ENCODE measurements at regions of chr6 and their contacts with region 1.

Region 1: DNA sequence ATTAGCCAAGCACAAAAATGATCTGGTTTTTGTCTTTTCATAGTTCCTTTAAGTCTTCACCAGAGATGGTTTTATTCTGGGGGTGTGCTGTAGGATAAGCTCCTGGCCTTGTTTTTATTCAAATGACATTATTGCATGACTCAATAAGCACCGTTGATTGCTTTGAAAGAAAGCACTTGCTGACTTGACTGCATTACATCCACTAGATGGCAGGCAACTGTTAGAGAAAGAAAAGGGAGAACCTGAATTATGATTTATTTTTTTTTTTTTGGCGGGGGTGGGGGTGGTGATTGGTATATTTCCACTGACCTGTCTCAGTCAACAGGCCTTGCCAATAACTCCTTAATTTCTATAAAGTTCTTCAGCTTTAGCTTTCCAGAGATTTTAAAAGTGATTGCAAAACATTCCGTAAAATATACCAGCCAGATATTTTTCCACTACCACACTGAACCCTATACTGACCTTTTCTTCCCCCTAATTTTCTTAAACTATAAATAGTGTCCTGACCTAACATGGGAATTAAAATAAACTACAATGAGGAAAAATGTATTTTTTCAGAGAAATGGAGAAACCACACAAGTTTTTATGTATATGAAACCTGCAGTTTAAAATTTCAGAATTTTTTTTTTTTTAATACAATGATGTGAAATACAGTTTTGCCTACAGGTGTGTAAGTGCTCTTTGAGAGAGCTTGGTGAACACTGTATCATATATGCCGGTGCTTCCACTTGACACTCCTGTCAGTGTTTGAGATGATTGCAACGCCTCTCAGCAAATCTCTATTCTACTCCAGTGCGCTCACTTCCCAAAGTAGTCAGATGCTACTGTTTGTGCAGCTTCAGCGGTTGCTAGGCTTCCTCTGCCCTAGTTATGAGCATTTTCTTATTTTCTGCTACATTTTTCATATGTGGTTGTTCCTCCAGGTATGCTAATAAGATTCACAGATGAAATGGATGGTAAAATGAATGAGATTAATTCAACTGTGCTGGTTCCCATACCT is 274.3 kb downstream of the CD109 start:
- DNase-seq: peak; percentile 79
- H3K4me3 Mint-ChIP-seq: no peak overlapping the region
- H3K27ac Mint-ChIP-seq: peak overlapping the region; percentile 42
- H3K4me1 Mint-ChIP-seq: no peaks in the 10 kb centered on the region
- H3K27me3 Mint-ChIP-seq: no peaks in the 10 kb centered on the region
- CTCF ChIP-seq: peak; percentile 68

Region 2: GRCh38 chr6:73854998-73855718 is 115.1 kb before region 1 on chr6:
- CTCF ChIA-PET with region 1: interaction called, 17 read pairs
- POLR2A ChIA-PET with region 1: interaction called, 4 read pairs
- intact Hi-C with region 1: loop called (anchors 2 kb)
- DNase-seq: peak; percentile 77
- H3K4me3 Mint-ChIP-seq: no peak overlapping the region
- H3K27ac Mint-ChIP-seq: no peak overlapping the region
- H3K4me1 Mint-ChIP-seq: no peaks in the 10 kb centered on the region
- H3K27me3 Mint-ChIP-seq: no peaks in the 10 kb centered on the region
- CTCF ChIP-seq: peak; percentile 67

Region 3: GRCh38 chr6:73929421-73929820 is 40.9 kb before region 1 on chr6:
- CTCF ChIA-PET with region 1: interaction called, 12 read pairs
- POLR2A ChIA-PET with region 1: no interaction called
- intact Hi-C with region 1: no loop called
- DNase-seq: peak; percentile 95
- H3K4me3 Mint-ChIP-seq: no peak overlapping the region
- H3K27ac Mint-ChIP-seq: peak overlapping the region; percentile 68
- H3K4me1 Mint-ChIP-seq: peaks cover 18% of the 10 kb centered on the region
- H3K27me3 Mint-ChIP-seq: no peaks in the 10 kb centered on the region
- CTCF ChIP-seq: no peak

Region 4: GRCh38 chr6:73985891-73986290 is 15.6 kb after region 1 on chr6:
- CTCF ChIA-PET with region 1: interaction called, 42 read pairs
- POLR2A ChIA-PET with region 1: no interaction called
- intact Hi-C with region 1: no loop called
- DNase-seq: peak; percentile 58
- H3K4me3 Mint-ChIP-seq: no peak overlapping the region
- H3K27ac Mint-ChIP-seq: no peak overlapping the region
- H3K4me1 Mint-ChIP-seq: no peaks in the 10 kb centered on the region
- H3K27me3 Mint-ChIP-seq: no peaks in the 10 kb centered on the region
- CTCF ChIP-seq: peak; percentile 31